OCI-LY7 (cell line): ENCODE measurements at regions of chr16 and their contacts with region 1.

Region 1: DNA sequence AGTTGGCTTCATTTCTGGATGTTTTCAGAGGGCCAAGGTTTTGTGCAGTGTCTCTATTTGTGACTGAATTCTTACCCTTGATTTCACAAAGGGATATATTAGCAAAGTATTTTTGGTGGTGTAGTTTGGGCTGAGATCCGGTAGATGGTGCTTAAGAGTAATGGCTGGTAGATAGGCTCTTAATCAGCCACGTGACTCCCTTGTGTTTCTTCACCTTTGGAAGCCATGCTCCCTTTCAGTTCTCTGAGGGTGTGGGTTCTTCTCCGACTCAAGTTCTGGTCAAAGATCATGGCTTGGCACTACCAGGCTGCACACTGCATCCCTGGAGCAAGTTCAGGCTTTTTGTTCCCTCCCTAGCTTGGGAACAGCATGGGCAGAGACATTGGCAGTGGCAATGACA is 887.3 kb downstream of the CDH8 start:
- DNase-seq: peak; percentile 60
- H3K4me3 ChIP-seq: no peak overlapping the region
- H3K27ac ChIP-seq: no peak overlapping the region
- H3K4me1 ChIP-seq: peaks cover 29% of the 10 kb centered on the region
- CTCF ChIP-seq: peak; percentile 79

Region 2: GRCh38 chr16:60651346-60651745 is 497.6 kb before region 1 on chr16:
- CTCF ChIA-PET with region 1: no interaction called
- POLR2A ChIA-PET with region 1: no interaction called
- intact Hi-C with region 1: no loop called
- DNase-seq: no peak
- H3K4me3 ChIP-seq: no peak overlapping the region
- H3K27ac ChIP-seq: no peak overlapping the region
- H3K4me1 ChIP-seq: no peaks in the 10 kb centered on the region
- CTCF ChIP-seq: no peak

Region 3: DNA sequence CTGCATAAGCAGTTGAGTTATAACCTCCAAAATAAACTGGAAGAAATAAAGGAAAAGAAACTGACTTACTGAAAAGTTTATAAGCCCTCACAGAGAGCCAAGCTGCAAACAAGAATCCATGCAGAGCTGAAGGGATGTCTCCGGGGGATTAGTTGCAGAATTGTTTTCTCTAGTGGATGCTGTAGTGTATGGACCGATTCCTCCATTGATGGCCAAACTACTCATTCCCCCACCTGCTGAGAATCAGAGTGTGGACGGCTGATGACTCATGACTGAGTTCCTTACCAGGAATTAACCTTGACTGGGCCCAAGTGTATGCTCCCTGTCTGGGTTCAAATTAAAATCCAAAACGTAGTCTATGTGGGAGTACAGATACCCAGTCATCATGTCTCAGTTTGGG is 981.2 kb after region 1 on chr16:
- CTCF ChIA-PET with region 1: no interaction called
- POLR2A ChIA-PET with region 1: no interaction called
- intact Hi-C with region 1: loop called (anchors 5 kb)
- DNase-seq: no peak
- H3K4me3 ChIP-seq: no peak overlapping the region
- H3K27ac ChIP-seq: no peak overlapping the region
- H3K4me1 ChIP-seq: no peaks in the 10 kb centered on the region
- CTCF ChIP-seq: no peak